T-cell (primary cell): ENCODE measurements at regions of chr5 and their contacts with region 1.

Region 1: GRCh38 chr5:126339215-126339805 is 83.9 kb upstream of the GRAMD2B start:
- DNase-seq: peak in 30 of 35 experiments; percentile 3 to 78 (median 26)
- ATAC-seq: peak in 2 of 4 experiments; percentile 55
- H3K4me3 ChIP-seq: no peak overlapping the region
- H3K4me3 Mint-ChIP-seq: no peak overlapping the region
- H3K27ac ChIP-seq: no peak overlapping the region
- H3K27ac Mint-ChIP-seq: no peak overlapping the region
- H3K4me1 ChIP-seq: no peaks in the 10 kb centered on the region
- H3K4me1 Mint-ChIP-seq: no peaks in the 10 kb centered on the region
- H3K27me3 ChIP-seq: no peaks in the 10 kb centered on the region
- H3K27me3 Mint-ChIP-seq: peaks cover 13 to 24% of the 10 kb centered on the region in 2 donors

Region 2: GRCh38 chr5:126354012-126354857 is 14.9 kb after region 1 on chr5:
- CTCF ChIA-PET with region 1: interaction called, 5 to 20 read pairs
- POLR2A ChIA-PET with region 1: interaction called in 1 of 2 experiments, 3 read pairs
- DNase-seq: peak in 2 of 35 experiments; percentile 1 to 69
- ATAC-seq: peak in 3 of 4 experiments; percentile 53 to 67 (median 64)
- H3K4me3 ChIP-seq: peak overlapping the region in 1 of 2 donors; percentile 48
- H3K4me3 Mint-ChIP-seq: peak overlapping the region; percentile 22 to 68 (median 41)
- H3K27ac ChIP-seq: no peak overlapping the region
- H3K27ac Mint-ChIP-seq: peak overlapping the region in 1 of 2 donors; percentile 11
- H3K4me1 ChIP-seq: peaks cover 2 to 7% of the 10 kb centered on the region in 2 experiments
- H3K4me1 Mint-ChIP-seq: peaks cover 13 to 18% (median 14%) of the 10 kb centered on the region in 3 donors
- H3K27me3 ChIP-seq: no peaks in the 10 kb centered on the region
- H3K27me3 Mint-ChIP-seq: peaks cover 0 to 2% of the 10 kb centered on the region in 2 donors

Region 3: DNA sequence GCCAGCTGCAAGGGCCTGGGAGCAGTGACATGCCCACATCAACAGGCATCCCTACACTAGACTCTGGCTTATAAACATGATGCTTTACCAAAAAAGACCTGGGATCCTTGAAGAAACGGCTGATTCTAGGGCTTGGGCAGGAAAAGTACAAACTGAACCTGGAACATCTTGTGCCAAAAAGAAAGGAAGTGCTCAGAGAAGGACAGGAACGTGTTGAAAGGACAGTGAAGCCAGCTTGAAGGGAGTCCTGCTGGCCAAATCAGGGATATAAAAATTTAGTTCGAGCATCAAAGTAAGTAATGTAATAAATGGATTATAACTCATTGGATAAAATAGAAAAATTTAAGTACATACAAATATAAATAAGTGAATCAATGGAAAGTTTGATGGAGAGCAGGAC is 197.6 kb after region 1 on chr5:
- CTCF ChIA-PET with region 1: interaction called, 14 to 43 read pairs
- POLR2A ChIA-PET with region 1: interaction called in 1 of 2 experiments, 3 read pairs
- DNase-seq: no peak
- ATAC-seq: no peak
- H3K4me3 ChIP-seq: no peak overlapping the region
- H3K4me3 Mint-ChIP-seq: no peak overlapping the region
- H3K27ac ChIP-seq: no peak overlapping the region
- H3K27ac Mint-ChIP-seq: no peak overlapping the region
- H3K4me1 ChIP-seq: no peaks in the 10 kb centered on the region
- H3K4me1 Mint-ChIP-seq: no peaks in the 10 kb centered on the region
- H3K27me3 ChIP-seq: peaks cover 0 to 3% of the 10 kb centered on the region in 2 experiments
- H3K27me3 Mint-ChIP-seq: no peaks in the 10 kb centered on the region

Region 4: DNA sequence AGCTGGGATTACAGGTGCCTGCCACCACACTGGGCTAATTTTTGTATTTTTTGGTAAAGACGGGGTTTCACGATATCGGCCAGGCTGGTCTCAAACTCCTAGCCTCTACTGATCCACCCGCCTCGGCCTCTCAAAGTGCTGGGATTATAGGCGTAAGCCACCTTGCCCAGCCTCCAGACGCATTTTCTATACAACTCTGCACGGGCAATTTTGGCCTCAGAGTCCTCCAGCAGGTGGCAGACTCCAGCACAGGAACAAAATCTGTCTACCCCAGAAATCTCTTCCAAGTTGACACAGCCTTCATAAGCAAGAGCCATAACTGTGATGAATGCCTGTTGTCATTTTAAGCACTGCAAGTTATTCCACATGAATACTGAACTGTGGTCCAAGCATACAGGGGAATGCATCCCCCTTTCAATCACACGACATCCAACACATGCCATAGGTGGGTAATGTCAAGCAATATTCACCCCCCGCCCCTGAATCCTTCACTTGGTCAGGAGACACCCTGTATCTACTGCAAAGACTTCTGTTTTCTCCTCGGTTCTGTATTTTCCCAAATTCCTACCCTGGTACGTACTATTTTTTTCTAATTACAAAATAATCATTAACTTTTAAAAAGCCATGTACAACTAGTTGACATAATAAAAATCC is 204.9 kb after region 1 on chr5:
- CTCF ChIA-PET with region 1: interaction called, 14 to 43 read pairs
- POLR2A ChIA-PET with region 1: interaction called in 1 of 2 experiments, 5 read pairs
- DNase-seq: peak in 27 of 35 experiments; percentile 4 to 37 (median 23)
- ATAC-seq: no peak
- H3K4me3 ChIP-seq: no peak overlapping the region
- H3K4me3 Mint-ChIP-seq: no peak overlapping the region
- H3K27ac ChIP-seq: no peak overlapping the region
- H3K27ac Mint-ChIP-seq: no peak overlapping the region
- H3K4me1 ChIP-seq: no peaks in the 10 kb centered on the region
- H3K4me1 Mint-ChIP-seq: no peaks in the 10 kb centered on the region
- H3K27me3 ChIP-seq: no peaks in the 10 kb centered on the region
- H3K27me3 Mint-ChIP-seq: no peaks in the 10 kb centered on the region

Region 5: GRCh38 chr5:126600631-126601511 is 261.6 kb after region 1 on chr5 and contains the start of gene PHAX:
- CTCF ChIA-PET with region 1: interaction called, 3 to 12 read pairs
- POLR2A ChIA-PET with region 1: no interaction called
- DNase-seq: peak; percentile 48 to 84 (median 67)
- ATAC-seq: peak; percentile 92 to 96 (median 94)
- H3K4me3 ChIP-seq: peak within 1 kb of the TSS; percentile 79 to 90
- H3K4me3 Mint-ChIP-seq: peak within 1 kb of the TSS; percentile 87 to 97 (median 94)
- H3K27ac ChIP-seq: peak within 1 kb of the TSS; percentile 76
- H3K27ac Mint-ChIP-seq: peak within 1 kb of the TSS; percentile 94 to 95
- H3K4me1 ChIP-seq: peaks cover 2 to 34% of the 10 kb centered on the region in 2 experiments
- H3K4me1 Mint-ChIP-seq: peaks cover 22 to 38% (median 37%) of the 10 kb centered on the region in 3 donors
- H3K27me3 ChIP-seq: no peaks in the 10 kb centered on the region
- H3K27me3 Mint-ChIP-seq: peaks cover 0 to 2% of the 10 kb centered on the region in 2 donors
- total RNA-seq, gene PHAX: 19.7 to 37.3 (median 30.3) TPM

Region 6: GRCh38 chr5:126718246-126718868 is 379.0 kb after region 1 on chr5:
- CTCF ChIA-PET with region 1: no interaction called
- POLR2A ChIA-PET with region 1: no interaction called
- DNase-seq: no peak
- ATAC-seq: no peak
- H3K4me3 ChIP-seq: no peak overlapping the region
- H3K4me3 Mint-ChIP-seq: no peak overlapping the region
- H3K27ac ChIP-seq: no peak overlapping the region
- H3K27ac Mint-ChIP-seq: no peak overlapping the region
- H3K4me1 ChIP-seq: no peaks in the 10 kb centered on the region
- H3K4me1 Mint-ChIP-seq: no peaks in the 10 kb centered on the region
- H3K27me3 ChIP-seq: no peaks in the 10 kb centered on the region
- H3K27me3 Mint-ChIP-seq: peaks cover 0 to under 1% of the 10 kb centered on the region in 2 donors